ENCODE measurements at regions of chr22 and their contacts with region 1.

Region 1: DNA sequence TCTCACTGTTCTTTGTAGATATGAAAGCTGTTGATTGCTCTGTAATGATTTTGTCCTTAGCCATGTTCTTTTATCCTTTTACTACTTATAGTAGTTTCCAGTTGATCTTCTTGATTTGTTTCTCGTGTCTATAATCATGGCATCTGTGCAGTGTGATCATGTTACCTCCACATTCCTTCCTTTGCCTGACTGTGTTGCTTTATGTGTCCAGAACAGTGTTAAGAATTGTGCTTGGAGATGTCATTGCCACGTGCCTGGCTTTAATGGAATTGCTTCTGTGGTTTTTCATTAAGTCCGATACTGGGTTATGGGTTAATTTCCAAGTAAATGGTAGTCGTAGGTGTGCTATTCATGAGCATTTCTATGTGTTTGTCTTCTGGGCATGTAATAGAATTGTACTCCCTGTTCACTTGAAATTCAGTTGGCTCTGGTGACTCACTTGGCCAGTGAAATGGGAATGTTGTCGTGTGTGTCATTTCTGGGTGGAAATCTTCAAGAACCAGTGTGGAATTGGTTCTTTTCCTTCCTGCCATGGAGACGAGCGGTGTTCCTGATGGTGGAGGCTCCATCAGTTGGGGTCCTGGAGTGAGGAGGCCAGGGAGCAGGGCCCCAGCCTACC is 6.8 kb downstream of the GTSE1 start:
- DNase-seq: no peak
- H3K4me3 ChIP-seq: no peak overlapping the region
- H3K27ac ChIP-seq: no peak overlapping the region
- H3K4me1 ChIP-seq: no peaks in the 10 kb centered on the region
- H3K27me3 ChIP-seq: no peaks in the 10 kb centered on the region
- CTCF ChIP-seq: no peak
- EP300 ChIP-seq: no peak
- POLR2A ChIP-seq: no peak

Region 2: GRCh38 chr22:46233231-46233630 is 70.2 kb before region 1 on chr22:
- intact Hi-C with region 1: no loop called
- DNase-seq: no peak
- H3K4me3 ChIP-seq: no peak overlapping the region
- H3K27ac ChIP-seq: no peak overlapping the region
- H3K4me1 ChIP-seq: no peaks in the 10 kb centered on the region
- H3K27me3 ChIP-seq: no peaks in the 10 kb centered on the region
- CTCF ChIP-seq: no peak
- EP300 ChIP-seq: no peak
- POLR2A ChIP-seq: no peak

Region 3: DNA sequence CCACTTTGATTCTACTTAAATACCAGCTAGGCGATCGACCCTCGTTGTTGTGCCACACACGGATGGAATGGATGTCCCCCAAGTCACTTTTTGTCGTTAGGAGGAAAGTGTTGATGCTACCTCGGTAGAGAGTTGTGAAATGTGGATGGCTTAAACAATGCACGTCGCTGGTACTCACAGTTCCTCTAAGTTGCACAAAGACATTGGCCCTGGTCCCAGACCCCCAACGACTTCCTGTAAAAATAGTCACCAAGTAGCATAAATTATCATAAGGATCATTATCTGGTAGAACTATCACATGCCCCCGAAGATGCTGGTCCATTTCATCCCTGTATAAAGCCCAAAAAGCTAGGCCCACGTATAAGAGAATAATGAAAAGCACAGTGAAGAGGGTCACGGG is 44.1 kb before region 1 on chr22:
- intact Hi-C with region 1: loop called in 1 of 4 experiments (anchors 2 kb)
- DNase-seq: no peak
- H3K4me3 ChIP-seq: no peak overlapping the region
- H3K27ac ChIP-seq: no peak overlapping the region
- H3K4me1 ChIP-seq: peaks cover 8% of the 10 kb centered on the region
- H3K27me3 ChIP-seq: no peaks in the 10 kb centered on the region
- CTCF ChIP-seq: no peak
- EP300 ChIP-seq: no peak
- POLR2A ChIP-seq: no peak

Measured in ovary (tissue), 10 donors.